Psoas muscle (tissue), 8 donors: ENCODE measurements at regions of chr19 and their contacts with region 1.

Region 1: DNA sequence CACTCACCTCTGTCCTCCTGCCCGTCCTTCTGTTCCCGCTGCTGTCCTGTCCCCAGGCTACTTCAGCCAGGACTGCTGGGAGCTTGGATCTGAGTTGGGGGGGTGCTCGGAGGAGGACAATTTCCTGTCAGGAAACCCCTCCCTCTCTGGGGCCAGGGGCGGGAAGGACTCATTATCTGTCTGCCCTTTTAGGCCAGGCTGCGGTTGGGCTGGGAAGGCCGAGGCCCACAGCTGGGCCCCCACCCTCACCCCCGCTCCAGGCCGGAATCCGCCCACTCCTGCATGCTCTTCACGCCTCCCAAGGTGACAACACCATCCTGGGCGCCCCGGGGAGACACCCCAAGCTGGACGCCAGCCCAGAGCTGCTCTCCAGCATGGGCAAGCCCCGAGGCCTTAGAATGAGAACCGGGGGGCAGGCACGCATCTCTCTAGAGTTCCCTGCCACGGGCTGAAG is at the start of gene EXOC3L2:
- DNase-seq: no peak
- ATAC-seq: no peak
- H3K4me3 ChIP-seq: no peak within 1 kb of the TSS
- H3K27ac ChIP-seq: no peak within 1 kb of the TSS
- H3K4me1 ChIP-seq: no peaks in the 10 kb centered on the region
- H3K27me3 ChIP-seq: no peaks in the 10 kb centered on the region
- CTCF ChIP-seq: no peak
- total RNA-seq, gene EXOC3L2: 0.62 to 1.3 (median 0.70) TPM

Region 2: DNA sequence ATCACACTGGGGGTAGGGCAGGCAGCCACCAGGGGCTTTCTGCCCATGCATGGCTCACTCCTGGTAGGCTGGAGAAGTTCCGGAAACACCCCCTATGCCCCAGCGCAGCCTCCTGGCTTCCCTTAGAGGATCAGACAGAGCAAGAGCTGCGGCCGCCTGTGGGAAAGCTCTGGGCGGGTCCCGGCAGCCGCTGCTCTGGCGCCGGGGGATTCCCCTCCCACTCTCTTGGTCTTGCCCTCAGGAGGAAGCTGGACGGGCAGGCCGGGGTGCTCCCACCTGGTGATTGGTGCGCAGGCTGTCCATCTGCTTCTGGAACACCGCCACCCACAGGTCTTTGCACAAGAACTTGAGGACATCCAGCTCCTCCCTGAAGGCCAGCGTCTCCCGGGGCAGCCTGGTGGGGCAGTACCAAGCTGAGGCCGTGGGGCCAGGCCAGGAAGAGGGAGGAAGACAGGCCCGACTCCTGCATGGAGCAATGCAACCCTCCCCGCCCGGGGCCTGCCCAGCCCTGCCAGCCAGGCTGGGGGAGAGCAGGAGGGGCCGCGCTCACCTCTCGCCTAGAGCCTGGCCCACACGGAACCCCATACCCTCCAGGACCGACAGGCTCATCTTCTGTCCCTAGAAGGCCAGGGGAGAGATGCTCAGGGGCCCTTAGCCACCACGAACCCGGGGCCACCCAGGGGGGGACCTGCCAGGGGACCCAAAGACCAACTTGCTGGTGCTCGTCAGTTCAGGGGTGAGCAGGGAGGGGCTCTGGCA is 80.6 kb before region 1 on chr19:
- intact Hi-C with region 1: loop called in 1 of 2 experiments (anchors 5 kb)
- DNase-seq: peak in 1 of 2 donors; percentile 40
- ATAC-seq: peak; percentile 21 to 54 (median 30)
- H3K4me3 ChIP-seq: no peak overlapping the region
- H3K27ac ChIP-seq: no peak overlapping the region
- H3K4me1 ChIP-seq: no peaks in the 10 kb centered on the region
- H3K27me3 ChIP-seq: peaks cover 0 to 25% (median 0%) of the 10 kb centered on the region in 3 donors
- CTCF ChIP-seq: no peak

Region 3: GRCh38 chr19:45455707-45456499 is 210.5 kb after region 1 on chr19:
- intact Hi-C with region 1: no loop called
- DNase-seq: peak; percentile 94 to 97
- ATAC-seq: peak; percentile 95 to 97 (median 95)
- H3K4me3 ChIP-seq: peak overlapping the region; percentile 46
- H3K27ac ChIP-seq: peak overlapping the region; percentile 88
- H3K4me1 ChIP-seq: peaks cover 37% of the 10 kb centered on the region
- H3K27me3 ChIP-seq: no peaks in the 10 kb centered on the region
- CTCF ChIP-seq: no peak